PC-9 (cell line): ENCODE measurements at regions of chr9 and their contacts with region 1.

Region 1: DNA sequence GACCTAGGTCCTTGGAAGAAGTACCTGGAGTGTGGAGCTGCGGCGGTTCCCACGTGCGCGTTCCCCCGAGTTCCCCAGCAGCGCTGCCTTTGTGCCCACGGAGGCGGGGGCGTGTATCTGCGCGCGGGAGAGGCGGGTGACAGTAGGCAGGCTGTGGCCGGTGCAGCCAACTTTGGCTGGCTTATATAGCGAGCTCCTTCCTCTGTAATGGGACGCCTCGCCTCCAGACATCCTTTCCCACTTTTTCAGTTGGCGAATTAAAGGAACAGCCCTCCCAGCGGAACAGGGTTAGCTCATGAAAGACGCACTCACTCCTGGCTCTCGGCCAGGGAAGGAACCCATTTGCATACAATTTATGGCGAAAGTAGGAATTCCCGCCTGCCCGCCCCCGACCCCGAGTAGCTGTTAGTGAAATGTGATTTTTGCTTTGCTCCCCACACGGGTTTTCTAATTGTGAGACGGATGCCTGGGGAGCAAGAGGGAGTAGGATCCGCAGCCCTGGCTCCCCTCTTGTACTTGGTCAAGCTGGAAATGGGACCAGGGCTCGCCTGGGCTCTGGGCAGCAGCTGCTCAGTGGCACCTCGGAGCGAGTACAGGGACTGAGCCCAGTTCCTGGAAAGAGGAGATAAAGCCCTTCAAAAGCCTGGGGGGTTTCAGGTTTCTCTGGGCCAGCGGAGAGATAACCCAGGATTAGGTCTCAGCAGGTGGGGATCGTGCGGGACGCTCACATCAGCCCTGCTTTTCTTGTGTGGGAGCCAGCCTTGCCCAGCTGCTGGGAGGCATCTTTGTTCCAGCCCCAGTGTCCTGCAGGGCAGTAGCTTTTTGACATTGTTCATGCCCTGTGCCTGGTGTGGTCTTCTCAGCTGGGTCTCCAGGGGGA is at the start of gene TNC:
- DNase-seq: peak in 1 of 2 experiments; percentile 55
- H3K4me3 ChIP-seq: peak within 1 kb of the TSS; percentile 48; the same call in 1 of the 2 replicates
- H3K27ac ChIP-seq: peak within 1 kb of the TSS; percentile 17; the same call in 1 of the 2 replicates
- H3K4me1 ChIP-seq: peaks cover 64% of the 10 kb centered on the region
- H3K27me3 ChIP-seq: peaks cover 1% of the 10 kb centered on the region; the same call in 1 of the 2 replicates
- CTCF ChIP-seq: no peak
- total RNA-seq, gene TNC: 1.1 and 1.9 TPM in 2 replicates

Region 2: DNA sequence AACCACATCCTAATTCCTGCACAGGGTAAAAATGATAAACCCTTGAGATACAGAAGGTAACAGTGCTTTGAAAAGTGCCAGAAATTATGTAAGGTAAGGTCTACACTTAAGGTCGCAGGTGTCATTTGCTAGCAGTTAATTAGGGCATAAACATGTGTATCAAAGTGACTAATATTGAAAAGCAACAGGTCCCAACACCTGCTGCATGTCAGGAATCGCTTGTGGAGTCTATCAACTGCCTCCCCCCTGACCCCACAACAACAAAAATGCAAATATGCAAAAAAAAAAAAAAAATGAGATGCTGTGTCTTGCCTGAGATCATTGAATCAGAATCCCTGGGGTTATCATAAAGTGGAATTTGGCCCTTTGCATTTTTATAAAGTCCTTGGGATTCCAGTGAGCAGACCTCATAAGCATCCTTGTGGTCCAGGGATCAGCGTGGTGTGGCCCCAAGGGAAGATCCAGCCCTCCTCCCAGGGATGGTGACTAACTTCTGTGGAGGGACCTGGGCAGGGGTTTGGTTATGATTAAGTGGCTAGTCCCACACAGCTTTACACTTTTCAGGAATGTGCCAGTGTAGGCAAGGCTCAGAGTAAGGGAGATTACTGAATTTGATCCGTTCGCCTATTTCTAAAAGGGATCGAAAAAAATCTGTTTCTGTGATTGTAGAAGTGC is 95.3 kb before region 1 on chr9:
- CTCF ChIA-PET with region 1: no interaction called
- POLR2A ChIA-PET with region 1: no interaction called
- intact Hi-C with region 1: loop called (anchors 1 kb)
- DNase-seq: no peak
- H3K4me3 ChIP-seq: no peak overlapping the region
- H3K27ac ChIP-seq: no peak overlapping the region
- H3K4me1 ChIP-seq: peaks cover 14% of the 10 kb centered on the region
- H3K27me3 ChIP-seq: no peaks in the 10 kb centered on the region
- CTCF ChIP-seq: no peak

Region 3: DNA sequence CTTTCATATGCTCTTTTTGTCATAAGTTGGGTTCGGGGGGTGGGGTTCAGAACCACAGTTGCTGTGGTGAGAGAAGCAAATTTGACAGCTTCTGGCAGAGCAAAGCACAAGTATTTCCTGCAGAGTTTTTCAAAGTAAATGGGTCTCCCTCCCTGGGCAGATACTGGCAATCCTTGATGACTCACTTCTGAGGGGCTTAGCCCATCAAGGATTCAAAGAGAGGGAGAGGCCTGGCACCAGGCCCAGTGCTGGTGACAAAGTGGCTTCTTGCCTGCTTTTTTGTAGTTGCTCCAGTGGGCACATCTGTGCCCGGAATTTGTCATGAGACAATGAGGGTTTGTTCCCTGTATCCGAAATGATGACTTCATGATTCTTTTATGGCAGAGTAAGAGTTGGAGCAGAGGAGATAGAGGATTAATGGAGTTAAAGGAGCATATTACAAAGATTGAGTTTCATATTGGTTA is 46.3 kb after region 1 on chr9:
- CTCF ChIA-PET with region 1: no interaction called
- POLR2A ChIA-PET with region 1: no interaction called
- intact Hi-C with region 1: loop called (anchors 2 kb)
- DNase-seq: peak; percentile 81 to 84
- H3K4me3 ChIP-seq: no peak overlapping the region
- H3K27ac ChIP-seq: no peak overlapping the region
- H3K4me1 ChIP-seq: peaks cover 23% of the 10 kb centered on the region
- H3K27me3 ChIP-seq: no peaks in the 10 kb centered on the region
- CTCF ChIP-seq: no peak

Region 4: DNA sequence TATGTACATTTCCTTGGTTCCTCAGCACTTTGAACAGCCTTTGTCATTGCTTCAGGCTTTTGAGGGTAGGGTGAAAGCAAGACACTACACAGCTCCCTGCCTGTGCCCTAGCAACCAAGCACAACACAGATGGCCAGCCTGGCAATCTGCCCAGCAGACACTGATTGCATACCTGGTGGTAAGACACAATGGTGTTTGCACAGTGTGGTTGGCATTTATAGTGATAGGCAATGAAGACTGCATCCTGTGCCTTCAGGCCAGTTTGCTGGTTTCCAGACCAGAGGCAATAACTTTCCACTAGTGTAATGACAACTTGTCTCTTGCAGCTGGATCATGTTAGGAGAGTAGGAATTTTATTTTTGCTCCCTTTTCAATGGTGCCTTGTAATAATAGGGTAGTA is 144.2 kb after region 1 on chr9:
- CTCF ChIA-PET with region 1: no interaction called
- POLR2A ChIA-PET with region 1: no interaction called
- intact Hi-C with region 1: loop called (anchors 1 kb)
- DNase-seq: peak; percentile 99
- H3K4me3 ChIP-seq: no peak overlapping the region
- H3K27ac ChIP-seq: peak overlapping the region; percentile 60
- H3K4me1 ChIP-seq: peaks cover 49% of the 10 kb centered on the region
- H3K27me3 ChIP-seq: no peaks in the 10 kb centered on the region
- CTCF ChIP-seq: no peak

Region 5: GRCh38 chr9:115524453-115525059 is 406.3 kb after region 1 on chr9:
- CTCF ChIA-PET with region 1: no interaction called
- POLR2A ChIA-PET with region 1: no interaction called
- intact Hi-C with region 1: loop called (anchors 5 kb)
- DNase-seq: peak; percentile 30 to 60
- H3K4me3 ChIP-seq: no peak overlapping the region
- H3K27ac ChIP-seq: no peak overlapping the region
- H3K4me1 ChIP-seq: no peaks in the 10 kb centered on the region
- H3K27me3 ChIP-seq: no peaks in the 10 kb centered on the region
- CTCF ChIP-seq: peak; percentile 84

Region 6: DNA sequence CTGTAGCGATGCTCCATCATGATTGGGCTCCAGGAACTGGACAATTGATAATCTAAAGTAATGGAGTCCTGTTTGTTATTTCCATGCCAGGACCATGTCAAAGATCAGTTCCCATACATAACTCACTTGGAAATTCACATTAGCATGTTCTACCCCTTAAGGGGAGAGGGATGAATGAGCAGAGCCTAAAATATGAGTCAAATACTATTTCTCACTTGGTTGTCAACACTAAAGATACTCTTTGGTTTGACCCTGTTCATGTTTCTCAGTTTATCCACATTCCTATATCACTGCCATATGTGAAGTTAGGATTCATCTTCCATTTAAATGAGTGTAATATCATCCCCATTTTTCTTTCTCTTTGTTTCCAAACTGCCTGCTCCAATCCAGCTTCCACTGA is 713.8 kb after region 1 on chr9:
- CTCF ChIA-PET with region 1: no interaction called
- POLR2A ChIA-PET with region 1: no interaction called
- intact Hi-C with region 1: no loop called
- DNase-seq: no peak
- H3K4me3 ChIP-seq: no peak overlapping the region
- H3K27ac ChIP-seq: no peak overlapping the region
- H3K4me1 ChIP-seq: no peaks in the 10 kb centered on the region
- H3K27me3 ChIP-seq: no peaks in the 10 kb centered on the region
- CTCF ChIP-seq: no peak